Psoas muscle (tissue), 8 donors: ENCODE measurements at regions of chr3 and their contacts with region 1.

Region 1: DNA sequence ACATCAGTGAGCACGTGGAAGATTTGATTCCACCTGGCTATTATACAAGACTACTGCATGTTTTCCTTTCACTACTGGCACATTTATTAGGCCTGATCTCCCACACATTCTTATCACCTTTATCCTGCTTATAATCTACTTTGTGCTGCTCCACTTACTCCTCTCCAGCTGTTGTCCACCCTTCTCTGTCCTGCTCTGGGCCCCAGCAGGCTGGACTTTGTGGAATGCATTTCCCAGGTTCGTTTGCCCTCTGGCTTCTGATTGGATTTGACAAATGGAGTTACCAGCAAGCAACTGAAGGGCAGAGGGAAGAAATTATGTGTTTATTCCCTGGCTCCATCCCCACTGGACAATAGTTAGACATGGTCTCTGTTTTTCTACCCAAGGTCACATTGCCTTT is 75.5 kb downstream of the DCLK3 start:
- DNase-seq: no peak
- ATAC-seq: no peak
- H3K4me3 ChIP-seq: no peak overlapping the region
- H3K27ac ChIP-seq: no peak overlapping the region
- H3K4me1 ChIP-seq: no peaks in the 10 kb centered on the region
- H3K27me3 ChIP-seq: no peaks in the 10 kb centered on the region
- CTCF ChIP-seq: no peak

Region 2: DNA sequence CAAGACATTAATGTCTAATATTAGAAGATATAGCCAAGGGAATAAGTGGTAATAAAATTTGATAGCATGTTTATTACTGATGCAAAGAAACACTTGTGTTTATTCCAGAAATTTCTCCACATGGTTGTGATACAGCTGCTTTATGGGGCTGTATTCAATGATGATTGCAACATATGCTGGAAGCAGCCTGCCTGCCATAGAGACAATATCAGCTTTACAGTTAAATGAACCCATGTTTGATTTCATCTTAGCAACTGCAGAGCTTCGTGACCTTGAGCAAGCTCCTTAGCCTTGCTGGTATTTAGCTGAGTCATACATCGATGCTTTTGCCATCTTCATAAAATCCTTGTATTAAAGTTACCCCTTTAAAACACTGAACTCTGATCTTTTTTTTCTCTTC is 476.6 kb before region 1 on chr3:
- intact Hi-C with region 1: loop called in 1 of 2 experiments (anchors 5 kb)
- DNase-seq: no peak
- ATAC-seq: no peak
- H3K4me3 ChIP-seq: no peak overlapping the region
- H3K27ac ChIP-seq: no peak overlapping the region
- H3K4me1 ChIP-seq: no peaks in the 10 kb centered on the region
- H3K27me3 ChIP-seq: no peaks in the 10 kb centered on the region
- CTCF ChIP-seq: no peak

Region 3: DNA sequence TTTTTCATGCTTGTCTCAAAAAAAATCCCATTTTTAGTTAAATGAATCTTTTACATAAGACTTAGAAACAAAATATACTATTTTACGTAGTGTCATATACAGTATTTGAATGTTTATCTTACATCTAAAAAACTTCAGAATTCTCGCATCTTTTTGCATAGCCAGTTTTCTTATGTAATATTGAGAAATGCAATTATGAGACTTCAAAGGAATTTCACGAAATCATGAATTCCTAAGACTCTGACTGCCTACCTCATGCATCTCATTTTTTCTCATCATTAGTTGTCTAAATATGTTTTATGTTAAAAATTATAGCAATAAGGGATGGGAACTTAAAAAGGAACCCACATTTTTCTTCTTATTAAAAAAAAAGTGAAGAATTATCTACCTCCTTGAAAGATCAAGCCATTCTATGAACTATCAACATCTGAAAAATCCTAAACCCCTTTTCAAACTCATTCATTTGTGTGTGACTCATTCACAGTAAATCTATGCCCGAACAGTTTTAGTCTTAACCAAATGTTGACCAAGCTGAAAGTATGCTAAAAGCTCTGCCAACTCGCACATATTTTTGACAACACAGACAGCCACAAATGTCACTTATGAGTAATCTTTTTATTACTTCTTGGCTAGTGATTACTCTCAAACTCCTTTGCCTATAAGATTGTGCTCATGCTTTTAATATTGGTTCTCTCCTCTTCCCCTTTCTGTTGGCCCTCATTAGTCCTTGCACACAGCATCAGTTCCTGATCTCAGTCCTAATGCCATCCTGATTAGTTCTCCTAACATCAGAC is 40.4 kb before region 1 on chr3:
- intact Hi-C with region 1: no loop called
- DNase-seq: no peak
- ATAC-seq: no peak
- H3K4me3 ChIP-seq: no peak overlapping the region
- H3K27ac ChIP-seq: no peak overlapping the region
- H3K4me1 ChIP-seq: no peaks in the 10 kb centered on the region
- H3K27me3 ChIP-seq: no peaks in the 10 kb centered on the region
- CTCF ChIP-seq: no peak

Region 4: GRCh38 chr3:36876181-36876936 is 187.5 kb after region 1 on chr3:
- intact Hi-C with region 1: no loop called
- DNase-seq: no peak
- ATAC-seq: no peak
- H3K4me3 ChIP-seq: no peak overlapping the region
- H3K27ac ChIP-seq: no peak overlapping the region
- H3K4me1 ChIP-seq: no peaks in the 10 kb centered on the region
- H3K27me3 ChIP-seq: no peaks in the 10 kb centered on the region
- CTCF ChIP-seq: no peak